Motor neuron (in vitro differentiated cells): ENCODE measurements at regions of chr13 and their contacts with region 1.

Region 1: DNA sequence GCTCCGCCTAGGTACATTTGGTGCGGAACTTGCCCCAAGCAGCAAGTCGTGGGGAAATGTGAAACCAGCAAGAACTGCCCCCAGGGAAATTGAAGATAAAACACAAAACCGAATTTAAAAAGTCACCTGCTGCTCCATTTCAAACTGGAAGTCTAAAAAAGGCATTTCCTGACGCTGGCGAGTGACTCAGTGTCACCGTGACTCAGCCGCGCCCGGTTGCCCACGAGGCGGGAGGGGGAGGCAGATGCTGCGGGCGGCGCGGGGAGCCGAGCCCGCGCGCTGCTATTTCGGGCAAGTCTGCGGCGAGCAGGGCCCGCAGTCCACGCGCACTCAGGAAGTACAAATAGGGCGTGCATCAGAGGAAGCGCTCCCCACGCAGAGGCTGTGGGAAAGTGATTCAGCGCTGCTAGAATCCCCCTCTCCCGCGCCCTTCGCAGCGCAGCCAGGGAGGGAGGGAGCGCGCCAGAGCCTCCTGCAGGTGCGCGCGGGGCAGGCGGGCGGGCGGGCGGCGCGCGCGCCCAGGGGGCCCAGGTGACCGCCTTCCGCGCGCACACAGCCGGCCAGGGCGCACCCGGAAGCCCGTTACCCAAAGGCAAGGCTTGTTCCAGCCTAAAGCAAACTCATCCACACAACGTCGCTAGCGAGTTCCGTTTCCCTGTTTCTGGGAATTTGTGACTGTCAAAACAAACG is 168.8 kb downstream of the COL4A1 start:
- ATAC-seq: peak; percentile 82 to 87 (median 85)
- H3K4me3 ChIP-seq: peak overlapping the region; percentile 38 to 41 (median 41)
- H3K27ac ChIP-seq: no peak overlapping the region
- H3K4me1 ChIP-seq: peaks cover 16 to 22% of the 10 kb centered on the region in 2 donors

Region 2: DNA sequence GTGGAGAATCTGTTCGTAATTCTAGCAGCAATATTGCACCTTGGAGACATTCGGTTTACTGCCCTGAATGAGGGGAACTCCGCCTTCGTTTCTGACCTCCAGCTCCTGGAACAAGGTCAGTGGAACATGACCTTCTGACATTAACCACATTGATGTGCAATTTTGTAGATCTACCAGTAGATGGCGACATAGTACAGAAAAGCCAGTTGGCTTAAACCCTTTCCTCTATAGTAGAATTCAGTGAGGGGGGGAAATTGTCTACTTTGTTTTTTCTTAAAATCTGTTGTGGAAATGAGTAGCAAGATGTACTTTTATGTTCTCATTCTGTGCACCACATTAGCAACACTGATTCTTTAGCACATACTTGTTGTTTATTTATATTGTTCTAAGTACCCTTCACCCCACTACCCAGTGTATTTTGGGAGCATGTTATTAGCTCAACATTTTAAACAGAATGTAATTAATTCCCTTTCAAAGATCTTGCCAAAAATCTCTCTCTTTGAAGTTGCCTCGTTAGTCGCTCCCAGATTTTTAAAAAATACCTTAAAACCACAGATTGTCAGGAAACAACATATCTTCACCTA is 1176.5 kb before region 1 on chr13:
- in situ Hi-C with region 1: loop called in 1 of 9 experiments (anchors 25 kb)
- ATAC-seq: peak; percentile 26 to 76 (median 54)
- H3K4me3 ChIP-seq: no peak overlapping the region
- H3K27ac ChIP-seq: no peak overlapping the region
- H3K4me1 ChIP-seq: peaks cover 0 to 6% of the 10 kb centered on the region in 2 donors